HEK293 (cell line): ENCODE measurements at regions of chr22 and their contacts with region 1.

Region 1: GRCh38 chr22:33221568-33221967 is 163.4 kb upstream of the SYN3 start:
- H3K4me3 ChIP-seq: no peak overlapping the region
- H3K27ac ChIP-seq: no peak overlapping the region
- H3K4me1 ChIP-seq: no peaks in the 10 kb centered on the region
- CTCF ChIP-seq: no peak

Region 2: DNA sequence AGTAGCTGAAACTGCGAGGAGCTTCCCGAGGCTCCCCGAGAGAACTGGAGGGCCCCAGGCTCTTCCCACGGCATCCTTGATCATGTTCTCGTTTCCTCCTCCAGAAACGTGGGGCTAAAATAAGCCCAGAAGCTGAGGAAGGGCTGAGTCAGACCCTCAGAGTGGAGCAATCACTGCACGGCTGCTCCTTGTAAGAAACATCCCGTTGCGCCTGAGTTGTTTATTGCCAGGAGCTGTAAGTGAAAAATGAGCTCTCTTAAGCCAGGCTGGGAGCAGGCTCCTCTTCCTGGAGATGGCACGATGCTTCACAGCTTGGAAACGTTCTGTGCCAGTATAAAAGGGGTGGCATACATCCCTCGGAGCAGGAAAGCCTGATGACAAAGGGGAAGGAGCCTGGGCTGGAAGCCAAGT is 116.1 kb before region 1 on chr22:
- CTCF ChIA-PET with region 1: no interaction called
- POLR2A ChIA-PET with region 1: no interaction called
- H3K4me3 ChIP-seq: no peak overlapping the region
- H3K27ac ChIP-seq: no peak overlapping the region
- H3K4me1 ChIP-seq: peaks cover 4% of the 10 kb centered on the region
- CTCF ChIP-seq: no peak

Region 3: GRCh38 chr22:33209930-33210784 is 11.4 kb before region 1 on chr22:
- CTCF ChIA-PET with region 1: interaction called, 23 read pairs
- POLR2A ChIA-PET with region 1: no interaction called
- H3K4me3 ChIP-seq: no peak overlapping the region
- H3K27ac ChIP-seq: no peak overlapping the region
- H3K4me1 ChIP-seq: no peaks in the 10 kb centered on the region
- CTCF ChIP-seq: peak; percentile 53; the same call in 1 of the 2 replicates